Activated T-helper 1 cell treated with anti-CD3 and anti-CD28 coated beads, Interleukin-12 subunit alpha, Interleukin-12 subunit beta, Interleukin-2, Interleukin-4 antibody, amounts not matched to agents 30 ng/mL and 10 ng/mL and 1 ng/mL, durations not matched to agents 14 hours and 24 hours and 36 hours (primary cell): ENCODE measurements at regions of chr6 and their contacts with region 1.

Region 1: GRCh38 chr6:31356946-31357466 is at the start of gene HLA-B:
- DNase-seq: peak; percentile 67
- H3K4me3 Mint-ChIP-seq: peak within 1 kb of the TSS; percentile 95
- H3K27ac Mint-ChIP-seq: peak within 1 kb of the TSS; percentile 95
- H3K4me1 Mint-ChIP-seq: peaks cover 64% of the 10 kb centered on the region
- H3K27me3 Mint-ChIP-seq: peaks cover 8% of the 10 kb centered on the region
- total RNA-seq, gene HLA-B: 3,770 and 3,814 TPM in 2 replicates

Region 2: GRCh38 chr6:29887819-29888776 is 1468.9 kb before region 1 on chr6:
- intact Hi-C with region 1: loop called (anchors 5 kb)
- DNase-seq: peak; percentile 83
- H3K4me3 Mint-ChIP-seq: peak overlapping the region; percentile 87
- H3K27ac Mint-ChIP-seq: peak overlapping the region; percentile 93
- H3K4me1 Mint-ChIP-seq: peaks cover 17% of the 10 kb centered on the region
- H3K27me3 Mint-ChIP-seq: peaks cover 9% of the 10 kb centered on the region

Region 3: GRCh38 chr6:31203345-31203979 is 153.5 kb before region 1 on chr6:
- intact Hi-C with region 1: loop called (anchors 1 kb)
- DNase-seq: peak; percentile 54
- H3K4me3 Mint-ChIP-seq: peak overlapping the region; percentile 90
- H3K27ac Mint-ChIP-seq: peak overlapping the region; percentile 95
- H3K4me1 Mint-ChIP-seq: peaks cover 54% of the 10 kb centered on the region
- H3K27me3 Mint-ChIP-seq: no peaks in the 10 kb centered on the region

Region 4: GRCh38 chr6:31271641-31272357 is 85.2 kb before region 1 on chr6 and contains the start of gene HLA-C:
- intact Hi-C with region 1: loop called (anchors 1 kb)
- DNase-seq: peak; percentile 88
- H3K4me3 Mint-ChIP-seq: peak within 1 kb of the TSS; percentile 97
- H3K27ac Mint-ChIP-seq: peak within 1 kb of the TSS; percentile 94
- H3K4me1 Mint-ChIP-seq: peaks cover 53% of the 10 kb centered on the region
- H3K27me3 Mint-ChIP-seq: peaks cover 4% of the 10 kb centered on the region
- total RNA-seq, gene HLA-C: 944 and 984 TPM in 2 replicates

Region 5: GRCh38 chr6:31336896-31337496 is 20.0 kb before region 1 on chr6:
- intact Hi-C with region 1: no loop called
- DNase-seq: no peak
- H3K4me3 Mint-ChIP-seq: no peak overlapping the region
- H3K27ac Mint-ChIP-seq: no peak overlapping the region
- H3K4me1 Mint-ChIP-seq: peaks cover 18% of the 10 kb centered on the region
- H3K27me3 Mint-ChIP-seq: peaks cover 2% of the 10 kb centered on the region

Region 6: DNA sequence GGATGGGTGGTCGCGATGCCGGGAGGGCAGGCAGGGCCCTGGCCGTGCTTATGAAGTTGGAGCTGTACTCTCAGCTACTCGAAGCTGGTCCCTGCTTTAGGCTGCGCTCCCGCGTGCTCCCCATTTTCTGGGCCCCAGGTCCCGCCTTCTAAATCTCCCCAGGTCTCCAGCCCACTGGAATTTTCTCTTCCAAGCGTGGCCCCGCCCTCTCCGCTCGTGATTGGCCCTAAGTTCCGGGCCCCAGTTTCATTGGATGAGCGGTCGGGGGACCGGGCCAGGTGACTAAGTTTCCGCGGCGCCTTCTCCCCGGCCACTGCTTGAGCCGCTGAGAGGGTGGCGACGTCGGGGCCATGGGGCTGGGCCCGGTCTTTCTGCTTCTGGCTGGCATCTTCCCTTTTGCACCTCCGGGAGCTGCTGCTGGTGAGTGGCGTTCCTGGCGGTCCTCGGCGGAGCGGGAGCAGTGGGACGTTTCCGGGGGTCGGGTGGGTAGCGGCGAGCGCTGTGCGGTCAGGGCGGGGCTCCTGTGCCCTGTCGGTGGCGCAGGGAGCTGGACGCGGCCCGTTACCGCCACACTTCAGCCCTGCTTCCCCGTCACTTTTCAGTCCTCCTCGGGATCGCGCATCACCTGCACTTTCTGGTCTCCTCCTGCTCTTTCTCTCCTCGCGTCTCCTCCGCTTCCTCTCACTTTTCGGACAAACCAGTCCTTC is 46.4 kb after region 1 on chr6 and contains the start of gene MICA:
- intact Hi-C with region 1: loop called (anchors 5 kb)
- DNase-seq: peak; percentile 66
- H3K4me3 Mint-ChIP-seq: peak within 1 kb of the TSS; percentile 84
- H3K27ac Mint-ChIP-seq: peak within 1 kb of the TSS; percentile 84
- H3K4me1 Mint-ChIP-seq: peaks cover 54% of the 10 kb centered on the region
- H3K27me3 Mint-ChIP-seq: peaks cover 2% of the 10 kb centered on the region
- total RNA-seq, gene MICA: 11.5 and 12.4 TPM in 2 replicates

Region 7: DNA sequence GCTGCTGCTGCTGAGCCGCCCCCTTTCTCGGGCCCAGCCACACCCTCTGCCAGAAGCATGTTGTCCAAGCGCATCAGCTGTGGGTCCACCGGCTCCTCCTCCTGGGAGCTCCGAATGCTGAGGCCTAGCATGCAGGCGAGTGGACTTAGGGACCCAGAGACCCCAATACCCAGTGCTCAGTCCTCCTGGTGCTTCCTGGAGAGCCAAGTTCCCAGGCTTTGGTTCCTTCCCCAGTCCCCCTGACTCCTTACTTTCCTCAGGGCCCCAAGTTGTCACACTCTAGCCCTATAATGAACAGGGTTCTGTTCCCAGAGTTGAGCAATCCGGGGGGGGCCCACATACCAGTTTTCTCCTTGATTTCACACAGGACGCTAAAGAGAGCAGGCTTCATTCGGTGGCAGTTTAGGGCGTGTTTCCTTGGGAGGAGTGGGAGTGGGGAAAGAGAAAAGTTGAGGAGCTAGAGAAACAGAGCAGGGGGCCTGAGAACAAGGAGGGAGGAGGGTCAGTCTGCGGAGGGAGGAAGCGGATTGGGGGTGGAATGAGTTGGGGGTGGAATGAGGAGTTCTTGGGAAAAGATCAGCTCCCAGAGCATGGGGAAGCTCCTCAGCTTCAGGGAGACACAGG is 831.5 kb after region 1 on chr6:
- intact Hi-C with region 1: no loop called
- DNase-seq: no peak
- H3K4me3 Mint-ChIP-seq: peak overlapping the region; percentile 82
- H3K27ac Mint-ChIP-seq: peak overlapping the region; percentile 83
- H3K4me1 Mint-ChIP-seq: peaks cover 54% of the 10 kb centered on the region
- H3K27me3 Mint-ChIP-seq: no peaks in the 10 kb centered on the region